ENCODE measurements at regions of chr18 and their contacts with region 1.

Region 1: DNA sequence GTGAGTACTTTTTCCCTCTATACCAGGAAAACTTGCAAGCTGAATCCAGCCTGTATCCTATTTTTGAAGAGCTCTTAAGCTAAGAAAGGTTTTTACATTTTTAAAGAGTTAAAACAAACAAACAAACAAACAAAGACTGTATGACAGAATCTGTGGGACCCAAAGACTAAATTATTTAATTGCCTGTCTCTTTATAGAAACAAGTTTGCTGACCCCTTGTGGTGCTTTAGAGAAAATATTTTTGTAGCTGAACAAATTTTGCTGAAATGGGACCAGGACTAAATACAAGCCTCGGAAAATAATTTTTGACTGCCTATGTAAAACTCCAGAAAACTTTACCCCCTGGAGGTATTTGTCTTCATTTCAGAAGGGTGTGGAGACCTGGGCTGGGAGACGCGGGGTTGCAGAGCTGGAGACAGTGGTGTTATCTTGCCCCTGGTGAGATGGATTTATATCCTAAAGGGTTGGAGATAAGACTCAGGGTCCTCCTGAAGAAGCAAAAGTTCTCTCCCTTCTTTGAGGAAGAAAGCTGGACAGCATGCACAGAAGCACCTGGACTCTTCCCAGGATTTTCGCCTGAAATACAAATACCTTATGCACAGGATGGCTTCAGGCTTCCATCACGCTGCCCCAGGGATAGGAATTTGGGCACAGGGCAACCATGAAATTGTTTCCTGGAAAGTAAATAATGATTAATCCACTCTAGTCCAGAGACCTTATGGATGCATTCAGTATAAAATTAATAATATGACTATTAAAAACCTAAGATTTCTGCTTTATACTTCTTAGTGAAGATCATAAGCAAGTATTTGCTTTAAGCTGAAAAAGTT is 54.3 kb downstream of the TMX3 start:
- DNase-seq: peak in 2 of 5 donors; percentile 51 to 62
- H3K4me3 ChIP-seq: no peak overlapping the region
- H3K27ac ChIP-seq: no peak overlapping the region
- H3K4me1 ChIP-seq: no peaks in the 10 kb centered on the region
- H3K27me3 ChIP-seq: no peaks in the 10 kb centered on the region
- CTCF ChIP-seq: peak; percentile 38

Region 2: DNA sequence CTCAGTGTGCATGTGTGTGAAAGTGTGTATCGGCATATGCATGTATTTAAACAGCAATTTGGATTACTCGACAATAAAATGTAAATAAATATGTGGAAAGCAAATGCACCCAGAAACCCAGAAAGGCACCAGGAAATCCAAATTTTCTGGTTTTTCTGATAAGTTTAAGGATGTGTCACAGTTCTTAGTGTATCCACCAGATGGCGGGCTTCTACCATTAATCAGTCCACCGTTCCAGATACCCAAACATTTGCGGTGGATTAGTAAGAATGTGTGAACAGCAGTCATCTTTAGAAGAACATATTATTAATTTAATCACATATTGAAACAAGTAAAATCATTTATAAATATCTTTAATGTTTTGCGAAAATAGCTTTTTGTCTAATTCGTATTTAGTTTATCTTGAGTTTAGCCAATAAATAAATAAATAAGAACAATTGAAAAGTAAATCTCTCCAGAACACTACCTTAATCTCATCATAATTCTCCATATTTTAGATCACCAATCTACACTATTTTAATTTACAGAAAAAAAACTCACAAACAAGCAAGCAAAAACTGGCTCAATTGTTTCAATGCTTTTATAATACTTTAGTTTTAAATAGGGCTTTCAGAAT is 1442.9 kb before region 1 on chr18:
- intact Hi-C with region 1: loop called (anchors 5 kb)
- DNase-seq: peak in 4 of 5 donors; percentile 42 to 72 (median 54)
- H3K4me3 ChIP-seq: no peak overlapping the region
- H3K27ac ChIP-seq: no peak overlapping the region
- H3K4me1 ChIP-seq: no peaks in the 10 kb centered on the region
- H3K27me3 ChIP-seq: no peaks in the 10 kb centered on the region
- CTCF ChIP-seq: peak; percentile 74

Region 3: GRCh38 chr18:68340606-68341005 is 320.0 kb before region 1 on chr18:
- intact Hi-C with region 1: no loop called
- DNase-seq: no peak
- H3K4me3 ChIP-seq: no peak overlapping the region
- H3K27ac ChIP-seq: no peak overlapping the region
- H3K4me1 ChIP-seq: no peaks in the 10 kb centered on the region
- H3K27me3 ChIP-seq: no peaks in the 10 kb centered on the region
- CTCF ChIP-seq: no peak

Region 4: DNA sequence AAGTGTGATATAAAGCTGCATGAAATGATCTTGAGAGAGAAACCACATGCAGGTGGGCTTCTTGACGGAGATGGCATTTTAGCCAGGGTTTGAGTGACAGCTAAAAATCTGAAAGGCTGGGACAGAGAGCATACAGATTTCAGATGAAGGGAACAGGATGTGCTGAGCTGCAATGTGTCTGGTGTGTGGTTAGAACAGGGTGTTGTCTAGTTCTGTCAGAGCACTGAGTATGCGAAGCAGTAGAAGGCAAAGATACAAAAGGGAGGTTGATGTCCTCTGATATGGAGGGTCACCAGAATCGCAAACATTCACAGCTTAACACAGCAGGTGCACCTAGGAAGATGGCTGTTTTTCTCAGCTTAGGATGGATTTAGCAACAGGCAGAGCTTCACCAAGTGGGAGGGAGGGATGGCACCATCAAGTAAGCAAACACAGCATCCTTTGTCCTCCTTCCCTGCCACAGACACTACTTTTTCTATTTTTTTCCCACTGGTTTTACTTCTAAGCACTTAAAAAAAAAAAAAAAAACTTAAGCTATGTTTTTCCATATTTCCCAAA is 128.2 kb before region 1 on chr18:
- intact Hi-C with region 1: no loop called
- DNase-seq: no peak
- H3K4me3 ChIP-seq: no peak overlapping the region
- H3K27ac ChIP-seq: no peak overlapping the region
- H3K4me1 ChIP-seq: no peaks in the 10 kb centered on the region
- H3K27me3 ChIP-seq: no peaks in the 10 kb centered on the region
- CTCF ChIP-seq: no peak

Region 5: GRCh38 chr18:68874361-68874760 is 213.8 kb after region 1 on chr18:
- intact Hi-C with region 1: no loop called
- DNase-seq: peak in 1 of 5 donors; percentile 7
- H3K4me3 ChIP-seq: no peak overlapping the region
- H3K27ac ChIP-seq: no peak overlapping the region
- H3K4me1 ChIP-seq: no peaks in the 10 kb centered on the region
- H3K27me3 ChIP-seq: no peaks in the 10 kb centered on the region
- CTCF ChIP-seq: no peak